Activated B cell treated with CpG ODN at 0.5 μM for 24 hours (primary cell): ENCODE measurements at regions of chr7 and their contacts with region 1.

Region 1: DNA sequence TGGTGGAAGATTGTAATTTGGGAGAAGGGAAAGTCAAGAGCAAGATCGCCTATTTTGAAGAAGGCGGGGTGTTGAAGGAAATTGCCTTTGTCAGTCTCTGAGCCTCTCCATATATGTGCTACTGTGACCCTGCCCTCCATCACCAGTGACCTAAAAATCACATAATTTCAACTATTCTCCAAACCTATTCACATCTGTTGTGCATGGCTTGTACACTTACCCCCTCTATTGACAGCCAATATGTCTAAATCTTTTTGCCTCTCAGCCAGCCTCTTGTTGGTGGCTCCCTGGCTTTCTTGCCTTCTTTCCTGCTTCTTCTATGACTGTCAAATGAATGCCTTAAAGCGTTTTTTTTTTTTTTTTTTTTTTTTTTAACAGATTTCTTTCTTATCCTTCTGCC is 295.6 kb downstream of the AUTS2 start:
- DNase-seq: no peak
- ATAC-seq: peak; percentile 34
- H3K4me3 Mint-ChIP-seq: no peak overlapping the region
- H3K27ac Mint-ChIP-seq: no peak overlapping the region
- H3K4me1 Mint-ChIP-seq: peaks cover 32% of the 10 kb centered on the region
- H3K27me3 Mint-ChIP-seq: no peaks in the 10 kb centered on the region
- CTCF ChIP-seq: no peak

Region 2: GRCh38 chr7:68904630-68905029 is 989.3 kb before region 1 on chr7:
- CTCF ChIA-PET with region 1: no interaction called
- POLR2A ChIA-PET with region 1: no interaction called
- intact Hi-C with region 1: no loop called
- DNase-seq: no peak
- ATAC-seq: no peak
- H3K4me3 Mint-ChIP-seq: no peak overlapping the region
- H3K27ac Mint-ChIP-seq: no peak overlapping the region
- H3K4me1 Mint-ChIP-seq: no peaks in the 10 kb centered on the region
- H3K27me3 Mint-ChIP-seq: no peaks in the 10 kb centered on the region
- CTCF ChIP-seq: no peak

Region 3: GRCh38 chr7:69403169-69403568 is 490.7 kb before region 1 on chr7:
- CTCF ChIA-PET with region 1: no interaction called
- POLR2A ChIA-PET with region 1: no interaction called
- intact Hi-C with region 1: loop called (anchors 1 kb)
- DNase-seq: no peak
- ATAC-seq: no peak
- H3K4me3 Mint-ChIP-seq: no peak overlapping the region
- H3K27ac Mint-ChIP-seq: no peak overlapping the region
- H3K4me1 Mint-ChIP-seq: no peaks in the 10 kb centered on the region
- H3K27me3 Mint-ChIP-seq: no peaks in the 10 kb centered on the region
- CTCF ChIP-seq: no peak

Region 4: GRCh38 chr7:69498671-69499070 is 395.2 kb before region 1 on chr7:
- CTCF ChIA-PET with region 1: no interaction called
- POLR2A ChIA-PET with region 1: no interaction called
- intact Hi-C with region 1: loop called (anchors 10 kb)
- DNase-seq: no peak
- ATAC-seq: no peak
- H3K4me3 Mint-ChIP-seq: no peak overlapping the region
- H3K27ac Mint-ChIP-seq: no peak overlapping the region
- H3K4me1 Mint-ChIP-seq: peaks cover 11% of the 10 kb centered on the region
- H3K27me3 Mint-ChIP-seq: peaks cover 2% of the 10 kb centered on the region
- CTCF ChIP-seq: no peak

Region 5: DNA sequence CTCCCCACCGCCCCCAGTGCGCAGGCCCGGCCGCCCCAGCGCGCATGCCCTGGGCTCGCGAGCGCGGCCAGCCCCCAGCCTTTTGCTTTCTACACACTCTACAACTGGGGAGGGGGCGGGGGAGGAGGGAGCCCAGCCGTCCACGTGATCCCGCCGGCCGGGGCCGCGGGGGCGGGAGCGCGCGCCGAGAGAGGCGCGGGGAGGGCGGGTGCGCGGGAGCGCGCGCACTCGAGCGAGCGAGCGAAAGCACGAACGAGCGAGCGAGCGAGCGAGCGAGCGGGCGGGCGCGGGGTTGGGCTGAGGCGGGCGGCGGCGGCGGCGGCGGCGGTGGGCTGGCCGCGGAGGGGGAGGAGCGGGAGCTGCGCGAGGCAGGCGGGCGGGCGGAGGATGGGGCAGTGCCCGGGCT is 295.8 kb before region 1 on chr7 and contains the start of gene AUTS2:
- CTCF ChIA-PET with region 1: no interaction called
- POLR2A ChIA-PET with region 1: no interaction called
- intact Hi-C with region 1: loop called (anchors 5 kb)
- DNase-seq: peak; percentile 78
- ATAC-seq: peak; percentile 75
- H3K4me3 Mint-ChIP-seq: peak within 1 kb of the TSS; percentile 93
- H3K27ac Mint-ChIP-seq: peak within 1 kb of the TSS; percentile 83
- H3K4me1 Mint-ChIP-seq: peaks cover 16% of the 10 kb centered on the region
- H3K27me3 Mint-ChIP-seq: no peaks in the 10 kb centered on the region
- CTCF ChIP-seq: no peak
- total RNA-seq, gene AUTS2: 13.0 and 15.9 TPM in 2 replicates

Region 6: GRCh38 chr7:69677054-69677852 is 216.7 kb before region 1 on chr7:
- CTCF ChIA-PET with region 1: no interaction called
- POLR2A ChIA-PET with region 1: no interaction called
- intact Hi-C with region 1: loop called (anchors 5 kb)
- DNase-seq: no peak
- ATAC-seq: no peak
- H3K4me3 Mint-ChIP-seq: no peak overlapping the region
- H3K27ac Mint-ChIP-seq: no peak overlapping the region
- H3K4me1 Mint-ChIP-seq: peaks cover 9% of the 10 kb centered on the region
- H3K27me3 Mint-ChIP-seq: no peaks in the 10 kb centered on the region
- CTCF ChIP-seq: no peak

Region 7: DNA sequence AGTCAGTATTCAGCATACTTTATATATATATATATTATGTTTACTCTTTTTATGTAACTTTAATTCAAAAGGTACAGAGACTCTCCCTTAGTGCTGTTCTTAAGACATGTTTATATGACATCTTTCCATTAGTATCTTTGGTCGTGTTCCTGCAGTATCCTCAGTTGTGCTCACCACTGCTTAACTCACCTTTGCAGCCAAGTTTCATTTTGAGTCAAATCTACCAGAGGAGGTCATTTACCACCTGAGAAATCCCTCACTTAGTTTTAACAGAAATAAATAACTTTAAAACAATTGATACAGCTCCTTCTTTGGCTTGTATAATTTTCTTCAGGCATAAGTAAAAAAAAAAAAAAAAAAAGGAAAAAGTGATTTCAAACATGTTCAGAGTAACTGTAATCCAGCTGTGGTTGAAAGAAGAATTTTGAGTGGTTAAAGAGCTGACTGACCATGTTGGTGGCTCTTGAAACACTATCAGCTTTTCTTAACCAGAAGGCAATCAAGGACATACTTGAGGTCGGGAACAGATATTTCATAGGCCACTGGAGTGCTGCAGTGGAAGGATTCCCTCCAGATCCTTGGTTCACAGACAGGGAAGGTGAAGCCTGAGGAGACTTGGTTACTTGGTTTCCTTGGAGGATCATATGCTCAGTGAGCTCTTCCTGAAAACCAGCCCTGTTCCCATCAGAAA is 178.9 kb before region 1 on chr7:
- CTCF ChIA-PET with region 1: no interaction called
- POLR2A ChIA-PET with region 1: no interaction called
- intact Hi-C with region 1: no loop called
- DNase-seq: no peak
- ATAC-seq: no peak
- H3K4me3 Mint-ChIP-seq: no peak overlapping the region
- H3K27ac Mint-ChIP-seq: no peak overlapping the region
- H3K4me1 Mint-ChIP-seq: peaks cover 6% of the 10 kb centered on the region
- H3K27me3 Mint-ChIP-seq: no peaks in the 10 kb centered on the region
- CTCF ChIP-seq: no peak

Region 8: DNA sequence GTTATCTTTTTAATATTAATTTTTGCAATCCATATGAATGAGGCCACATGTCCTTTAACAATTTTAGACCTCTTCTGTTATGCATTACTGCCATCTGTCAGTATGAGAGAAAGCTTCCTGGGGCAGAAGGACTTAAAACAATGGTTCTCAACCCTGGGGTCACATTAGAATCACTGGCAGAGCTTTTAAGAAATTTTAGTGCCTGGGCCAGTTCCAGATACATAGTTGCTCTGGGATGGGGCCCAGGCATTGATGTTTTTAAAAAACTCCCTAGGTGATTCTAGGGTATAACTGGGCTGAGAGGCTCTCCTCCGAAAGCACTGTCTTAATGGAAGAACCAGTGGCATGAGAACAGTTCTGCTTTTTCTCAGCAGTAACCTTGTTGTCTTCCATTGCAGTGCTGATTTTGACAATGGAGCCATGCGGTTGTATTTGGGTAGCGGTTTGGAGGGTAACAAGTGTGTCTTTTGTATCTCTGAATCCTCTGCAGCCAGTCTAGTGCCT is 68.7 kb before region 1 on chr7:
- CTCF ChIA-PET with region 1: no interaction called
- POLR2A ChIA-PET with region 1: no interaction called
- intact Hi-C with region 1: loop called (anchors 2 kb)
- DNase-seq: no peak
- ATAC-seq: peak; percentile 18
- H3K4me3 Mint-ChIP-seq: peak overlapping the region; percentile 90
- H3K27ac Mint-ChIP-seq: peak overlapping the region; percentile 96
- H3K4me1 Mint-ChIP-seq: peaks cover 72% of the 10 kb centered on the region
- H3K27me3 Mint-ChIP-seq: no peaks in the 10 kb centered on the region
- CTCF ChIP-seq: no peak

Region 9: DNA sequence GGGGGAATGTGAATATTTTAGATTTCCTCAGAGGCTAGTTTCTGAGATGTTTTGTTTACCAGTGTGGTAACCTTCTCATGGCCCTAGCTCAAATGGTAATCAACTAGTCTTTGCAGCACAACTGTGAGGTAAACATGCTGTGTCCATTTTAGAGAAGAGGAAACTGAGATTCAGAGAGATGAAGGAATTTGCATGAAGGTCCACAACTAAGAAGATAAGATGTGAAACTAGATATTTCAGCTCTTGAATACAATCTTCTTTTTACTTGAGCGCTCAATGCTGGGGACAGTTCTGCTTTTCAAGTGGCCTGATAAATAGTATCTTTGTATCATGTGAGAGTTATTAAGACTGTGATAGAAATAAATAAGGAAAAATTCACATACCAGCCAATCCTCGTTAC is 50.3 kb before region 1 on chr7:
- CTCF ChIA-PET with region 1: no interaction called
- POLR2A ChIA-PET with region 1: no interaction called
- intact Hi-C with region 1: loop called (anchors 5 kb)
- DNase-seq: no peak
- ATAC-seq: peak; percentile 37
- H3K4me3 Mint-ChIP-seq: peak overlapping the region; percentile 12
- H3K27ac Mint-ChIP-seq: peak overlapping the region; percentile 59
- H3K4me1 Mint-ChIP-seq: peaks cover 76% of the 10 kb centered on the region
- H3K27me3 Mint-ChIP-seq: no peaks in the 10 kb centered on the region
- CTCF ChIP-seq: no peak

Region 10: GRCh38 chr7:69941077-69941651 is 47.3 kb after region 1 on chr7:
- CTCF ChIA-PET with region 1: no interaction called
- POLR2A ChIA-PET with region 1: no interaction called
- intact Hi-C with region 1: no loop called
- DNase-seq: no peak
- ATAC-seq: no peak
- H3K4me3 Mint-ChIP-seq: no peak overlapping the region
- H3K27ac Mint-ChIP-seq: no peak overlapping the region
- H3K4me1 Mint-ChIP-seq: peaks cover 21% of the 10 kb centered on the region
- H3K27me3 Mint-ChIP-seq: no peaks in the 10 kb centered on the region
- CTCF ChIP-seq: no peak